A673 (cell line): ENCODE measurements at regions of chr14 and their contacts with region 1.

Region 1: GRCh38 chr14:32710731-32711680 is 227.7 kb upstream of the NPAS3 start:
- DNase-seq: peak; percentile 83
- H3K4me3 ChIP-seq: no peak overlapping the region
- H3K27ac ChIP-seq: no peak overlapping the region
- H3K4me1 ChIP-seq: peaks cover 49% of the 10 kb centered on the region
- H3K27me3 ChIP-seq: no peaks in the 10 kb centered on the region
- CTCF ChIP-seq: peak; percentile 74

Region 2: DNA sequence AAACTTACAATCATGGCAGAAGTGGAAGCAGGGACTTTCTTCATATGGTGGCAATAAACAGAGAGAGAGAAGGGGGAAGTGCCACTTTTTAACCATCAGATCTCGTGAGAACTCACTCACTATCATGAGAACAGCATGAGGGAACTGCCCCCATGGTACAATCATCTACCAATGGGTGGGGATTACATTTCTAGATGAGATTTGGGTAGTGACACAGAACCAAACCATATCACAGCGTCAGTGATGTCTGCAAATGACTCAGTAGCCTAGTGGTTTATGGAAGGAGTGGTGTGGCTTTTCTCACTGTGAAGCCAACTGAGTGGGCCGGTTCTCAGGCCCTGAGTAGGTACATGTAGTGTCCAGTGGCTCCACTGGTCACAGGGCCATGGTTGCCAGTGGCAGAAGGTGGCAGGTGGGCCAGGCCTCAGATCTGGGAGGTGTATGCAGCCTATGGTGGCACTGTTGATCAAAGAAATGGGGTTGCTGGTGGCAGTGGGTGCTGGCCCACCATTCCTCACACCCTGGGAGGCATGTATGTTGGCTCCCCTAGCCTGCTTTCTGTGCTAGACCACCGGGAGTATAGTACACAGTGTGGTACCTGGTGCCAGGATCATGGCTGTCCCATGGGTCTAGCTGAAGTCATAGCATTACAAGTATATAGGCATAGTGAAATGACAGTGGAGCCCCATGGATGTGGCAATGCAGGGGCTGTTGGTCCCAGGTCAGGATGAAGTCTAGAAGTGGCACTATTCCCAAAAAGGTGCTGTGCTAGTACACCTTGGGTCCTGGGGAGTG is 957.9 kb before region 1 on chr14:
- CTCF ChIA-PET with region 1: no interaction called
- POLR2A ChIA-PET with region 1: no interaction called
- intact Hi-C with region 1: no loop called
- DNase-seq: no peak
- H3K4me3 ChIP-seq: no peak overlapping the region
- H3K27ac ChIP-seq: no peak overlapping the region
- H3K4me1 ChIP-seq: no peaks in the 10 kb centered on the region
- H3K27me3 ChIP-seq: no peaks in the 10 kb centered on the region
- CTCF ChIP-seq: no peak

Region 3: DNA sequence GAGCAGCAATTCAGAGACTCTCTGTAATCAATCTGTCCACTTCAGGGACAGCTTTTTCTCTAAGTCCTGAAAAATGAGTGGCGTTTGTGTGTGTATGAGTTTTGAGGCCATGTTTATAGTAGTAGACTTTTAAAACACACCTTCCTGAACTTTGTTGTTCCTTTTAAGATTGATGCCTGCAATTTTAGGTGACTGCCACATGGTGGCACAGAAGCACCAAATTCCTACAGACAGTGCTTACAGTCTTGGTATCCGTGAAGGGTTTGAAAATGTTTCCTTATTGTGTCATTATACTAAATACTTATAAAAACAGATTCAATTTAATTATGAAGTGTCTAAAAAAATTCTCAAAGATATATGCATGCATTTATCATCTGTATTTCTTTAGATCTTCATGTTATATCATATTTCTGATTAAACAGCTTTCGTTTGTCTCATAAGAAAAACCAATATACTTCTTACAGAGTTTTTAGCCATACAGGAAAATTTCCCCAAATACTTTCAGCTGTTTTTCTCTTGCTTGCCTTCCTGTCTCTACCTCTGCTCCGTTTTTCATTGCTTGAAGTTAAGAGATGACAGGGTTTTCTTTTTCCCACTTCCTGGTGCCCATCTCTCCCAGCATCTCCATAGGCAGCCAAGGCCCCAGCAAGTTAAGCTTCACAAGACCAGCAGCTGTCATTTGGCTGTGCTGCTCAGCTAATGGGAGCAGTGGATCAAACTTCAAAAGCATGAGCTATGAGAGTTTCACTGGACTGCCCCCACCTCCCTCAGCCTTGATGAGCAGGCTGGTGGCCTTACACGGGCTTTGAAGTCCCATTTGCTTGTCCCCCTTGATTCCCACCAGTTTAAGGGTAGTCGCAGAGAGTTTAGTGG is 122.3 kb before region 1 on chr14:
- CTCF ChIA-PET with region 1: no interaction called
- POLR2A ChIA-PET with region 1: no interaction called
- intact Hi-C with region 1: loop called (anchors 5 kb)
- DNase-seq: peak; percentile 70
- H3K4me3 ChIP-seq: no peak overlapping the region
- H3K27ac ChIP-seq: no peak overlapping the region
- H3K4me1 ChIP-seq: peaks cover 10% of the 10 kb centered on the region
- H3K27me3 ChIP-seq: no peaks in the 10 kb centered on the region
- CTCF ChIP-seq: peak; percentile 90

Region 4: GRCh38 chr14:32826404-32827082 is 115.5 kb after region 1 on chr14:
- CTCF ChIA-PET with region 1: no interaction called
- POLR2A ChIA-PET with region 1: no interaction called
- intact Hi-C with region 1: loop called (anchors 2 kb)
- DNase-seq: peak; percentile 71
- H3K4me3 ChIP-seq: no peak overlapping the region
- H3K27ac ChIP-seq: no peak overlapping the region
- H3K4me1 ChIP-seq: peaks cover 13% of the 10 kb centered on the region
- H3K27me3 ChIP-seq: no peaks in the 10 kb centered on the region
- CTCF ChIP-seq: peak; percentile 53

Region 5: GRCh38 chr14:32934073-32934890 is 223.3 kb after region 1 on chr14:
- CTCF ChIA-PET with region 1: interaction called, 3 read pairs
- POLR2A ChIA-PET with region 1: no interaction called
- intact Hi-C with region 1: loop called (anchors 1 kb)
- DNase-seq: peak; percentile 78
- H3K4me3 ChIP-seq: peak overlapping the region; percentile 76
- H3K27ac ChIP-seq: no peak overlapping the region
- H3K4me1 ChIP-seq: peaks cover 27% of the 10 kb centered on the region
- H3K27me3 ChIP-seq: no peaks in the 10 kb centered on the region
- CTCF ChIP-seq: no peak

Region 6: GRCh38 chr14:33432407-33433023 is 721.5 kb after region 1 on chr14:
- CTCF ChIA-PET with region 1: no interaction called
- POLR2A ChIA-PET with region 1: no interaction called
- intact Hi-C with region 1: loop called (anchors 1 kb)
- DNase-seq: peak; percentile 69
- H3K4me3 ChIP-seq: no peak overlapping the region
- H3K27ac ChIP-seq: no peak overlapping the region
- H3K4me1 ChIP-seq: peaks cover 9% of the 10 kb centered on the region
- H3K27me3 ChIP-seq: no peaks in the 10 kb centered on the region
- CTCF ChIP-seq: peak; percentile 81